Lower leg skin (tissue), 4 donors: ENCODE measurements at regions of chr7 and their contacts with region 1.

Region 1: DNA sequence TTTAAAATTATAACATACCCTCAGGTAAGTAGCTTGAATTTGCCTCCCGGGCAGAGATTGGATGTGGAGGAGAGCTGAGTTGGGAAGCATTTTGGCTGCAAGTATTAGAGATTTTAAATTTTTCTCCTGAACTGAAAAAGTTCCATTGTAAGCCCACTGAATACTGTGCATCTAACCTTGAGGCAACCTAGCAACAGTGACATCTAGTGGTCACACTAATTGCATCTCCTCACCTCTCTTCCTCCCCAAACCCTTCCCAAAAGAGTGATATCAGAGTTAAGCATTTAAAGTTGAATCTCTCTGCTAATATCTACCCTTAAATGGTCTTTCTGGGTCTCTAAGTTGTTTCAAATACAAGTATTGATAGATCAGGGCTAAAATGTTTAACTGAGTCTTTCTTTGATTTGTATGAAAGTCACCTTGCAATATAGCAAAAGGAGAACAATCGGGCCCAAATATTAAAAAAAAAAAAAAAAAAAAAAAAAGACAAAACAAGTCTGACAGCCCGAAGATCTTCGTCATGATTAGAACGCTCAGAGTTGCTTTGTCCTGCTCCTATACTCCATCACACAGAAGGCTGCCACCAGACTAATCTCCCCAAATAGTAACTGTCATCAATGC is 40.4 kb upstream of the DLX5 start:
- DNase-seq: no peak
- H3K4me3 ChIP-seq: no peak overlapping the region
- CTCF ChIP-seq: no peak
- POLR2A ChIP-seq: no peak

Region 2: DNA sequence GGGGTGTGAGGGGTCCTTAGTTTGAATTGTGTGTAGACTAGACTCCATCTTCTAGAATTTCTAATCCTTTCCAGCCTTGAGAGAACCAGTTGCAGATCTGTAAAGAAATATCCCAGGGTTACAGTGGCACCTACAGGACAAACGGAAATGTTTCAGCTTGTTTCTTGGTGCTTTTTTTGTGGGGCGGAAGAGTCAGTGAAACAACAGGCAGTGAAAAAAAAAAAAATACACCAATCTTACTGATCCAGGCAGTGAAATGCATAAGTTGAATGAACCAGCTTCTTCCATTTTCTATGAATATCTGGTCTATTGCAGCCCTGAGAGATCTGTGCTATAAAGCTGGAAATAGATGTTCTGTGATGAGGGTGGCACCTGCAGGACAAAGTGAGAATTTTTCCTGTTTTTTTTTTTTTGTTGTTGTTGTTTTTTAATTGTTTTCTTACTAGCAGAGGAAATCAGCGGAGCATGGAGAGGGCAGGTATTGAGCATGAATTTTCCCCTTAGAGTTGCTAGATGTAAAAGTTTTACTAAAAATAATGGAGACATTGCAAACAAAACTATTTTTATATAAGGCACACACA is 1374.6 kb before region 1 on chr7:
- intact Hi-C with region 1: no loop called
- DNase-seq: no peak
- H3K4me3 ChIP-seq: no peak overlapping the region
- CTCF ChIP-seq: peak in 1 of 3 donors; percentile 42
- POLR2A ChIP-seq: no peak

Region 3: GRCh38 chr7:97298561-97298960 is 233.5 kb after region 1 on chr7:
- intact Hi-C with region 1: loop called (anchors 5 kb)
- DNase-seq: no peak
- H3K4me3 ChIP-seq: no peak overlapping the region
- CTCF ChIP-seq: no peak
- POLR2A ChIP-seq: no peak